A673 (cell line): ENCODE measurements at regions of chr4 and their contacts with region 1.

Region 1: DNA sequence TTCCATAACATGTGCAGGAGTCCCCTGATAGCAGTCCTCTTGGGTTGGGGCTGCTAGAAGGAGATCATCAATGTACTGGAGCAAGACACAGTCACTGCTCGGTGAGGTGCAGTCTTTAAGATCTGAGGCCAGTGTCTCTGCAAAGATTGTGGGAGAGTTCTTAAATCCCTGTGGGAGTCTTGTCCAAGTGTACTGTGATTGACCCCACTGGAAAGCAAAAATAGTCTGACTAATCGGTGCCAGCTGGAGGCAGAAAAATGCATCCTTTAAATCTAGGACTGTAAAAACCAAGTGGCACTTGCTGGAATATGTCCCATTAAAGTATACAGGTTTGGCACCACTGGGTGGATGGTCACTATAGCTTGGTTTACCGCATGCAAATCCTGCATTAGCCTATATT is 31.1 kb downstream of the SULT1E1 start:
- DNase-seq: no peak
- H3K4me3 ChIP-seq: no peak overlapping the region
- H3K27ac ChIP-seq: no peak overlapping the region
- H3K4me1 ChIP-seq: no peaks in the 10 kb centered on the region
- H3K27me3 ChIP-seq: no peaks in the 10 kb centered on the region
- CTCF ChIP-seq: no peak

Region 2: DNA sequence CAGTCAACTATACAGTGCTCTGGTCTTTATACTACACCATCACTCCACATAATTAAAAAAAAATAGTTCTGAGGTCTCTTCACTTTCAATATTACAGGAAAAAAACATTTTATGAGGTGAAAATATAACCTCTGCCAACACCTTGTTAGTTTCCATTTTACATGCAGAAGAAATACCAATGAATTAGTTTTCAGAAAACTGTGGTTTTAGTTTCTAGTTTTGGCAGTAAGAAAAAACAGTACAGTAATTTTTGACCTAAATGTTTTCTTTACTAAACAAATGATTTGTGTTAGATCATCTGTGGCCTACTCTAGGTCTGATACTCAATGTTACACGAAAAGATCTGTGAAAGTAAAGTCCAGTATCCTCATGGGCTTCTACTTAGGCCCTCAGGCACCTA is 21.1 kb after region 1 on chr4:
- CTCF ChIA-PET with region 1: no interaction called
- POLR2A ChIA-PET with region 1: no interaction called
- intact Hi-C with region 1: no loop called
- DNase-seq: no peak
- H3K4me3 ChIP-seq: no peak overlapping the region
- H3K27ac ChIP-seq: no peak overlapping the region
- H3K4me1 ChIP-seq: no peaks in the 10 kb centered on the region
- H3K27me3 ChIP-seq: no peaks in the 10 kb centered on the region
- CTCF ChIP-seq: no peak

Region 3: DNA sequence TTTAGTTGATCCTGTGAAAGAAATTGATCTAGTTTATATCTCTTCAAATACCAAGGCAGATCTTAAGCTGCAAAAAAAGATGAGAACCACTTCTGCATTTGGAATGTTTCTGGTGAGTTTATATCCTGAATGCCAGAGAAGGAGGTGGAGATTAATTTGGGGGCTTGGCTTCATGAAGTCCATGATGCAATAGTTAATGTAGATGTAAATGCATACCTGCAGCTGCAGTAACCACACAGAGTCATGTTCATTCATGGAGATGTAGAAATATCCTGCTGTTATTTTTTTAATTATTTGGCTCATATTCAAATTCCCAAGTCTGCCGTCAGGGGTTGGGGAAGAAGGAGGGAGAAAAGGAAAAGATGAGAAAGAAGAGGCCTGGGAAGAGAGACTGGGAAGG is 31.2 kb after region 1 on chr4 and contains the start of gene SULT1E1:
- CTCF ChIA-PET with region 1: no interaction called
- POLR2A ChIA-PET with region 1: interaction called, 3 read pairs
- intact Hi-C with region 1: loop called (anchors 5 kb)
- DNase-seq: peak; percentile 21
- H3K4me3 ChIP-seq: peak within 1 kb of the TSS; percentile 29
- H3K27ac ChIP-seq: peak within 1 kb of the TSS; percentile 27
- H3K4me1 ChIP-seq: peaks cover 19% of the 10 kb centered on the region
- H3K27me3 ChIP-seq: no peaks in the 10 kb centered on the region
- CTCF ChIP-seq: no peak
- total RNA-seq, gene SULT1E1: 13.4 and 16.0 TPM in 2 replicates